ENCODE measurements at regions of chr22 and their contacts with region 1.

Region 1: DNA sequence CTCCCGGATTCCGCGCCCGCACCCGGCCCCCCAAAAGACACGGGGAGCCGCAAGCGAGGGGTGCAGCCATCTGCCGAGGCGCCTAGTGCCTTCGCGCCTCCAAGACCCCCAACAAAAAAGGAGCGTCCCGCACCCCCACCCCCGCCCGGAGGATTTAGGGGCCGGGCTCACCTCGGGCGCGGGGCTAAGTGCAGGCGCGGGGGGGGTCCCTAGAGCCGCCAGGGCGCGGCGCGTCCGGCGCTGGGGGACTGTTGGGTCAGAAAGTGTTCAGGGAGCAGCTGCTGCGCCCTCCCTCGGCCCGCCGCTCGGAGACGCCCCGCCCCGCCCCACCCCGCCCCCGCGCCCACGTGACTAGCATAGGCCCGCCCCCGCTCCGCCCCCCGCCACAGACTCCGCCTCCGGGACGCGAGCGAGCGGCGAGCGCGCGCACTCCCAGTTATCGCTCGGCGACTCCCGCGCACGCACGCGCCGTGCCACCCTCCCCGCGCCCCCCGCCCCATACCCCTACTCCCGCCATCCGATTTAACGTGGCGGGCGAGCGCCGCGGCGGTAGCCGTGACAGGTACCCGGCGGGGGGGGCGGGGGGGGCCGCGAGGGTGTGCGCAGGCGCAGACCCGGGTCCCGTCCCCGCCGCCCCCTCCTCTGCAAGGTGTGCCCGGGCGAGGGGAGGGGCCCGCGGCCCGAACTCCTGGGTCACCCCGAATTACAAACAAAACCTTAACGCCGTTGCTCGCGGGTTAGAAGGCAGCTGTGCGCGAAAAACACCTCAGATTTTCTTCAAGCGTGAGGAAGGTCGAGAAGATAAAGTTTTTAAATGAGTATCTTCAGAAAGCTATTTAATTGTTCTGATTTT is 56.2 kb downstream of the KCNJ4 start:
- DNase-seq: peak; percentile 89
- H3K4me3 ChIP-seq: peak overlapping the region; percentile 52
- H3K27ac ChIP-seq: peak overlapping the region; percentile 82
- H3K4me1 ChIP-seq: no peaks in the 10 kb centered on the region
- H3K27me3 ChIP-seq: no peaks in the 10 kb centered on the region
- CTCF ChIP-seq: no peak

Region 2: DNA sequence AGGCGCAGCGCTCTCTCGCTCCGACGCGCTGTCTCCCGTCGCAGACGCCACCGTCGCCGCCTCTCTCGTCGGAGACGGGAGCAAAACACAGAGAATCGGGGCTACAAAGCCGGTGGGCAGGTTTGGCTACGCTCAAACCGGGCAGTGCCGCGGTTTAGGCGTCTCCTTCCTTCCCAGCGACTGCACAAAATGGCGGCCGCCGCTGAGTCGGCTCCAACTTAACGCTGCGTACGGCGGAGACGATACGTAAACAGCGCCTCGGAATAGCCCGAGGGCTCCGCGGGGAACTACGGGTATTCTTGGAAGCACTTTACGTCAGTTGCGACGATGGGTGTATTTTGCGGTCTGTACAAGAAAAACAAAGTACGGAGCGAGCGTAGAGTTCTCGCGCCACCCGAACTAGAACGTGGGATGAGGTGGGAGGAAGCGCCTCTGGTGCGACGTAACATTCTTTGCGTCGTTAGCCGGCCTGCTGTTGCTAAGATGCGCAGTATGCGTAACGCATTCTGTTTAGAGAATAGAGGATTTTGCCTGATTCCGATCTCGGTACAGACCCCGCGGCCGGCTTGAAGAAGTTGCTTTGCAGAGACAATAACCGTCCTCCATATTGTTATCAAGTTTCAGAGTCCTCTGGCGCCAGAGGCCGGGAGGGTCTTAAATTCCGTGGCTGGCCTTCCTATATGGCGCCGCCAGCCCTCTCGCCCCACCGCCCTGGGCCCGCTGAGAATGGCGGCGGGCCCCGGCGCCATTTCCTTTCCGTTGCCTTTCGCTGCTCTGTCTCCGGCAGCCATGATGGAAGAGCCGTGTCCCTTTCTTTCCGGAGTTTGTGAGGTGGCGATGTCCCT is 107.5 kb after region 1 on chr22 and contains the start of gene DDX17:
- intact Hi-C with region 1: loop called (anchors 10 kb)
- DNase-seq: peak; percentile 95
- H3K4me3 ChIP-seq: peak within 1 kb of the TSS; percentile 91
- H3K27ac ChIP-seq: peak within 1 kb of the TSS; percentile 100
- H3K4me1 ChIP-seq: peaks cover 9% of the 10 kb centered on the region
- H3K27me3 ChIP-seq: no peaks in the 10 kb centered on the region
- CTCF ChIP-seq: no peak
- total RNA-seq, gene DDX17: 333 to 359 TPM

Measured in colonic mucosa (tissue), 4 donors.